MCF 10A (cell line): ENCODE measurements at regions of chr14 and their contacts with region 1.

Region 1: DNA sequence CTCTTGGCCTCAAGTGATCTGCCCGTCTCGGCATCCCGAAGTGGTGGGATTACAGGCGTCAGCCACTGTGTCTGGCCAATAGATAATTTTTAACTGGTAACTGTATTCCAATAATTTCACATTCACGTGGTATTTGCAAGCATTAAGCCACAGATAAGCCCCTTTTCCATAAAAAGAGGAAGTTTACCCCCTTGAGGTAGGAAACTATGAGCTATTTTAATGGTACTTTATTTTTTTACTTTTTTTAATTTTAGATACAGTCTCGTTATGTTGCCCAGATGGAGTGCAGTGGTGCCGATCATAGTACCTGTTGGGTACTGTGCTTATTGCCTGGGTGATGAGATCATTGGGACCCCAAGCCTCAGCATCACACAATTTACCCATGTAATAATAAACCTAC is 42.9 kb upstream of the AP4S1 start:
- DNase-seq: no peak
- H3K4me3 Mint-ChIP-seq: no peak overlapping the region
- H3K27ac Mint-ChIP-seq: no peak overlapping the region
- H3K4me1 Mint-ChIP-seq: peaks cover 6% of the 10 kb centered on the region
- H3K27me3 Mint-ChIP-seq: no peaks in the 10 kb centered on the region
- CTCF ChIP-seq: no peak

Region 2: GRCh38 chr14:30779196-30779595 is 203.3 kb before region 1 on chr14:
- CTCF ChIA-PET with region 1: no interaction called
- POLR2A ChIA-PET with region 1: no interaction called
- intact Hi-C with region 1: no loop called
- DNase-seq: peak; percentile 42
- H3K4me3 Mint-ChIP-seq: no peak overlapping the region
- H3K27ac Mint-ChIP-seq: no peak overlapping the region
- H3K4me1 Mint-ChIP-seq: no peaks in the 10 kb centered on the region
- H3K27me3 Mint-ChIP-seq: peaks cover 35% of the 10 kb centered on the region
- CTCF ChIP-seq: no peak

Region 3: DNA sequence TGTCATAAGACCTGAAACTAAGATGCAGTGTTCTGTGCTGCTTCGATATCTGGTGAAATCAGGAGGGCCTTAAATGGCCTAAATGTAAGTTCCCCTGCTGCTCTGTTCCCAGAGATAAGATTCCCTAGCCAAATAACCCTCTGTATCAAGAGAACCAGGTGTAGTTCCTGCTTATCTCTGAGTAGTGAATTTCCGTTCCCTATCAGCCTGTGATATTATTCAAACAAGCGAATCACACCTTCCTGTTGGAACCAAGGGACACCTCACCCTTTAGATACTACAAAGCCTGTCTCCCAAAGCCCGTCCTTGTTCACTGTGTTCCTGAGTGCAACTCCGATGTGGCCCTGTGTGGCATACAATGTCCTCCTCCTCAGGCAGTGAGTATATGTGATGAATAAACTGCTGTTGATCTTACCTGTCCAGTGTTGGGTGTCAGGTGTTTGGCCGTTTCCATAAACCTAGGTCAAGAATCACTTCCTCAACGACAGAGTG is 160.4 kb before region 1 on chr14:
- CTCF ChIA-PET with region 1: no interaction called
- POLR2A ChIA-PET with region 1: no interaction called
- intact Hi-C with region 1: no loop called
- DNase-seq: no peak
- H3K4me3 Mint-ChIP-seq: no peak overlapping the region
- H3K27ac Mint-ChIP-seq: no peak overlapping the region
- H3K4me1 Mint-ChIP-seq: no peaks in the 10 kb centered on the region
- H3K27me3 Mint-ChIP-seq: no peaks in the 10 kb centered on the region
- CTCF ChIP-seq: no peak

Region 4: DNA sequence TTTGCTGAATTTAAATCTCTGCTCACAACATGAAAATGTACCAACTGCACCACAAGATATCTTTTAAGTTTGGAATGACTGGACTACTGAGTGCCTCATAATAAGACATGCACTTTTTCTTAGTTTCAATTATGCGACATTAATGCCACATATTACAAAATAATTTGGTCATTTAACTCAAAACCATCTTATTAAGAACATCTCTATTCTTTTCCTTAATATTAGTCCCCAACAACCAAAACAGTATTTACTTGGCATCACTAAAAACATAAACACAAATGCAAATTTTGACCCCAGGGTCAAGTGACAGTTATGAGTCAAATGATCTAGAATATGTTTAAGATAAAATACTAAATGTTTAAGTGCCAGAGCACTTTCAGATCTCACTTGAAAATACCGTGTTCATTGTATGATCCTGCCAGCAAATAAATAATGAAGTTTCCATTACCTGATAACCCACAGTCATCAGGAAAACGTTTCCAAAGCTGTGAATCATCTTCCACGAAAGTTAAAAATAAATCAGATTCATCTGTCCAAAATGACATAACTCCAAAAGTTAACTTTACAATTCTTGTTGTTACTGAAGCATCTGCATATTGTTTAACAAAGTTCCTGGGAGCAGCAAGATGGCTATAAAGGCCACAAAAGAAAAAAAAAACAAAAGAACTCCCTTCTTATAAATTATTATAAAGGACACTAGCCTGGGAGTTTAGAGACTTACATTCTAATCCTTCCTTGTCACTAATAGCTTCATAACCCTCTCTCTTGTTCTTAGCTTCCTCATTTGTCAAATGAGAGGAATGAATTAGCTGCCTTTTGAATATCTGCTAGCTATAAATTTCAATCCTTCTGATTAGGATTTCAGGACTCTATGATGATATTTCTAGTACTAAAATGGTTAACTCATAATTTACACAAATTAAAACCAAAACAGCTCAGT is 12.4 kb after region 1 on chr14:
- CTCF ChIA-PET with region 1: interaction called, 10 read pairs
- POLR2A ChIA-PET with region 1: interaction called, 4 read pairs
- intact Hi-C with region 1: no loop called
- DNase-seq: peak; percentile 16
- H3K4me3 Mint-ChIP-seq: peak overlapping the region; percentile 14
- H3K27ac Mint-ChIP-seq: peak overlapping the region; percentile 71
- H3K4me1 Mint-ChIP-seq: peaks cover 11% of the 10 kb centered on the region
- H3K27me3 Mint-ChIP-seq: no peaks in the 10 kb centered on the region
- CTCF ChIP-seq: no peak

Region 5: GRCh38 chr14:31059152-31059924 is 76.8 kb after region 1 on chr14:
- CTCF ChIA-PET with region 1: interaction called, 14 read pairs
- POLR2A ChIA-PET with region 1: interaction called, 3 read pairs
- intact Hi-C with region 1: no loop called
- DNase-seq: peak; percentile 82
- H3K4me3 Mint-ChIP-seq: no peak overlapping the region
- H3K27ac Mint-ChIP-seq: peak overlapping the region; percentile 70
- H3K4me1 Mint-ChIP-seq: peaks cover 26% of the 10 kb centered on the region
- H3K27me3 Mint-ChIP-seq: no peaks in the 10 kb centered on the region
- CTCF ChIP-seq: no peak

Region 6: DNA sequence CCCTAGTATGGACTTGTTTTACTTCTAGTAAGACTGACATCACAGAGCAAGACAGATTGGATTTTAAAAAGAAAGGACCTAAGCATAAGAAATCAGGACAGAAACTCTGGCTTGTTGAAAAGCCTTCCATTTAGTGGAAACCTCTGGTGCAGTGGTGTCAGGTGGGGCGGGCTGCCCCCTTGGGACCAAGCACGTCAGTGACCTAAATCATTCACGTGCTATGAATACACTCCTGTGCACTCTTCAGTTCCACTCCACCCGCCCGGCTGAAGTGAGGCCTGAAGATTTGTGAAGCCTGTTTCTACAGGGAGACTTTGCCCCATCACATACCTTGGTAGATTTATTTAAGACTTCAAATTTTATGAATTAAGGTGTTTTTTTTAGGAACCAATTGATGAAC is 101.9 kb after region 1 on chr14:
- CTCF ChIA-PET with region 1: interaction called, 26 read pairs
- POLR2A ChIA-PET with region 1: interaction called, 5 read pairs
- intact Hi-C with region 1: loop called (anchors 1 kb)
- DNase-seq: no peak
- H3K4me3 Mint-ChIP-seq: no peak overlapping the region
- H3K27ac Mint-ChIP-seq: no peak overlapping the region
- H3K4me1 Mint-ChIP-seq: no peaks in the 10 kb centered on the region
- H3K27me3 Mint-ChIP-seq: no peaks in the 10 kb centered on the region
- CTCF ChIP-seq: no peak

Region 7: DNA sequence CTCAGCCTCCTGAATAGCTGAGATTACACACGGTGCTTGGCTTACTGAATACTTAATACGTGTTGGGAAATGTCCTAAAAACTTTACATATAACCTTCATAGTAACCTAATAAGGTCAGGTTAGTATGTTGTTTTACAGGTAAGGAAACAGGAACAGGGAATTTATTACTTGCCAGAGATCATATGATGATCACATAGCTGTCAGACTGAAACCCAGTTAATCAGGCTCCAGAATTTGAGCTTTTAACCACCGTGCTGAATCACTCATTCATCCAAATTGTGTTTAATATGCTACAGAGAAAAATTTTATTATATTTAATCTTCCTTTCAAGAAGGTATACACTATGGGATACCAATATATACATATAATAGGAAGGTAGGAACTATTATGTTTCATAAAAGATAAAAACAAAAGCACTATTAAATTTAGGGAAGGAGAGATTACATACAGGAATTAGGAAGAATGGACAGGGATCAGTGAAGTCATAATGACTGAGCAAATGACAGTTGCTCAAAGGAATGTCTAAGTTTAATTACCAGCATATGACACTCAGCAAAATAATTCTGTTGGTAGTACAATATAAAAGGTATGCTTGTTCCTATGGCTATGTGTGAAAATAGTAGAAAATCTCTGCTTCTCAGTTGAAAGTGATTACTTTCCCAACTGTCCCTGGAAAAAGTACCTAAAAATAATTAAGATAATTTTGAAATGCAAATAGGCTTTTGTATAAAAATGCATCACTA is 378.6 kb after region 1 on chr14:
- CTCF ChIA-PET with region 1: no interaction called
- POLR2A ChIA-PET with region 1: no interaction called
- intact Hi-C with region 1: loop called (anchors 2 kb)
- DNase-seq: no peak
- H3K4me3 Mint-ChIP-seq: no peak overlapping the region
- H3K27ac Mint-ChIP-seq: no peak overlapping the region
- H3K4me1 Mint-ChIP-seq: peaks cover 6% of the 10 kb centered on the region
- H3K27me3 Mint-ChIP-seq: no peaks in the 10 kb centered on the region
- CTCF ChIP-seq: no peak